Activated CD4-positive, alpha-beta T cell treated with anti-CD3 and anti-CD28 coated beads for 36 hours (primary cell): ENCODE measurements at regions of chr2 and their contacts with region 1.

Region 1: DNA sequence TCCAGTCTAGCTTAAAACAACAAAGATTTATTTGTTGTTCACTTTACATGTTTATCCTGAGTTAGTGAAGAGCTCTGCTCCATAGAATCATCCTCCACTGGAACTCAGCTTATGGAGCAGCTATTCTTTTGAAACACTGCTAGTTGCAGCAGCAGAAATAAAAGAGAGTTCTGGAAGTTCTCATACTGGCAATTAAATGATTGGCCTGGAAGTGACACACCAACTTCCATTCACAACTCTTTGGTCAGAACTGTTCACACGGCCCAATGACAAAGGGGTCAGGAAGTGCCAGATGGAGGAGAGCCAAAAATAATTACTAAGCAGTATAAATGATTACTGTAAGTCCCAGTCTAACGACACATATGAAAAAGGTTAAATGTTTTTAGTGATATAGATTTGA is 39.1 kb downstream of the FBXO11 start:
- DNase-seq: no peak
- ATAC-seq: no peak
- H3K4me3 Mint-ChIP-seq: no peak overlapping the region
- H3K27ac Mint-ChIP-seq: peak overlapping the region; percentile 24
- H3K4me1 Mint-ChIP-seq: peaks cover 85% of the 10 kb centered on the region
- H3K27me3 Mint-ChIP-seq: no peaks in the 10 kb centered on the region

Region 2: DNA sequence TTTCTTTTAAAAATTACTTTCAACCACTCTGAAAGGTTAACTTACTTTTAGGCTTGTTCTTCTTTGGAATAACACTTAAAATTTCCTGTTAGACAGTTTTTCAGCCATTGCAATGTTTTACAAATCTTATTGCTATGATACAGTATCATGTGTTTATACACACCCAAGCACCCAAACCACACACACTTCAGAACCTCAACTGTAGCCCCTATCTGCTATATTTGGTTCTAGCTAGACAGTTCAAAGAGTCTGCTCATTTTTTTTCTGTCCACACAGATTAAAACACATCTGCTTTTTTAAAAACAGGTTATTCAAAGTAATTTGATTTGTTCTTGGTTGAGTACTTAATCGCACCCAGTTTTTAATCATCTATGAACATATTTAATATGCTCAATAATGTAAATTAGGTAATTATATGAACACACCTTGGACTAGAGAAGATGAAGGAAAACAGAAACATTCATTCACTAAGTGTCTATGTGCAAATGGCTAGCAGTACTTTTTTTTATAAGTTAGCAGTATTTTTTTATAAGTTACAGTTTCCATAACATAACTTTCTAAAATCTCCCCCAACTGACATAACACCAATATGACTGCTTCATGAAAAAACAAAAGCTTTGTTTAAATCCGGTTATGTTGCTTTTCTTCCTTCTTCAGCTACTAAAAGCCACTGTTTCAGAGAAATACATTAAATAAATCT is 21.5 kb after region 1 on chr2:
- CTCF ChIA-PET with region 1: interaction called, 11 read pairs
- POLR2A ChIA-PET with region 1: no interaction called
- intact Hi-C with region 1: no loop called
- DNase-seq: no peak
- ATAC-seq: peak; percentile 51
- H3K4me3 Mint-ChIP-seq: no peak overlapping the region
- H3K27ac Mint-ChIP-seq: peak overlapping the region; percentile 40
- H3K4me1 Mint-ChIP-seq: peaks cover 72% of the 10 kb centered on the region
- H3K27me3 Mint-ChIP-seq: no peaks in the 10 kb centered on the region